ENCODE measurements at regions of chr16 and their contacts with region 1.

Region 1: GRCh38 chr16:15949210-15950160 is at the start of gene ABCC1:
- DNase-seq: peak; percentile 52
- H3K4me3 Mint-ChIP-seq: peak within 1 kb of the TSS; percentile 94
- H3K27ac Mint-ChIP-seq: peak within 1 kb of the TSS; percentile 92
- H3K4me1 Mint-ChIP-seq: peaks cover 35% of the 10 kb centered on the region
- H3K27me3 Mint-ChIP-seq: peaks cover 2% of the 10 kb centered on the region
- total RNA-seq, gene ABCC1: 41.4 to 44.2 TPM

Region 2: DNA sequence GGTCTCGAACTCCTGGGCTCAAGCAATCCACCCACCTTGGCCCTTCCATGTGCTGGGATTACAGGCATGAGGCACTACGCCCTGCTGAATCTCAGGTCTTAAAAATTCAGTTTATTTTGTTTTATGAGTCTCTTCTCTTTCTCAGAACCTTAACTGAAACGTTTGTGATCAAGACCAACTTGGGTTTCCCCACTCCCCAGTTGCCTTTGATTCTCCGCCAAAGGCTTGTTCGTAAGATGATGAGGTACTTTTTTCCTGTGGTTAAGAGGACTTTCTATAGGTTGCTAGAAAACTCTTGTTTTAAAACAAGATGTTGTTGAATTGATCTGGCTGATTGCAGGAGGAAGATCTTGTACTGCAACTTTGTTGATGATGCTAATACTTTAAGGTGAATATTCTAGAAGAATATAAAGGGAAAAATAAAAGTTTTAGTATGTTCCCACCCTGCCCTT is 11.6 kb after region 1 on chr16:
- CTCF ChIA-PET with region 1: no interaction called
- POLR2A ChIA-PET with region 1: interaction called, 52 read pairs
- DNase-seq: peak; percentile 71
- H3K4me3 Mint-ChIP-seq: peak overlapping the region; percentile 79
- H3K27ac Mint-ChIP-seq: peak overlapping the region; percentile 98
- H3K4me1 Mint-ChIP-seq: peaks cover 68% of the 10 kb centered on the region
- H3K27me3 Mint-ChIP-seq: no peaks in the 10 kb centered on the region

Region 3: GRCh38 chr16:16048904-16049582 is 99.6 kb after region 1 on chr16:
- CTCF ChIA-PET with region 1: no interaction called
- POLR2A ChIA-PET with region 1: no interaction called
- DNase-seq: no peak
- H3K4me3 Mint-ChIP-seq: no peak overlapping the region
- H3K27ac Mint-ChIP-seq: no peak overlapping the region
- H3K4me1 Mint-ChIP-seq: peaks cover 5% of the 10 kb centered on the region
- H3K27me3 Mint-ChIP-seq: no peaks in the 10 kb centered on the region

Measured in activated CD4-positive, alpha-beta memory T cell treated with anti-CD3 and anti-CD28 coated beads, Interleukin-2, amount 10 ng/mL, durations not matched to agents 7 days and 5 days (primary cell).